Colonic mucosa (tissue), 4 donors: ENCODE measurements at regions of chr17 and their contacts with region 1.

Region 1: DNA sequence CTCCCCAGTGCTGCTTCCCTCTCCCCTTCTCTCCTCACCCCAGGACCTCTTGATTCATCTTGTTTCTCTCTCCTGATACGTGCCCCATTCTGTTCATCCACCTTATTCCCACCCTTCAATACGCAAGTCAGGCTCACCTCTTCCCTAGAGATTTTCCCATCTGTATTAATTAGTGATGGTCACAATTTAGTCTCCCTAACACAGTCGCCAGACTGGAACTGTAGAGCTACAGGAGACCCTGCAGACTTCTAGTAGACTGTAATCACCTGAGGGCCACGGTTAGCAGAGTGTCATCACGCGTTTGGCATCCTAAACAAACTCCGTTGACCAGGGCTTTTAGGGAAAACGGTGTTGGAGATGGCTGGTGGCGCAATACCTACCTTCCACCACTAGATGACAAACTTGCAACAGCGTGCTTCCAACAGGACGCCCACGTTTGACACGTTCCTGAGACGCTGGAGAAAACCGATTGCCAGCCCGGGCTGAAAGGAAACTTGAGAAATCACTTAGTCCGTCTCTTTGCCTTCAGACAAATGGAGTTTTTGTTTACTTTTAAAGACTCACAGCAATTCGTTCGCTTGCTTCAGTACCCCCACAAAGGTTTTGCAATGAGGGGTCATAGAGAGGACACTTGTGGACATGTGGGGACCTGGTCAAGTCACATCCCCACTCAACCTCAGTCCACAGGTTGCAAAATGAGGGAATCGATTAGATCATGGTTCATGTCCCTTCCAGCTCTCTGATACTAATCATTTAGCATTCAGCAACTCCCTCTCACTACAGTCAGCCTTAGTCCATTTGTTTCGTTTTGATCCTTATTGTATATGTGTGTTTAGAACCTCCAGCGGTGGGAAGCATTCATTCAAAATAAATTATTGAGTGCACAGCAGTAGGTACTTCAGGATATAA is 20.6 kb downstream of the MYL4 start:
- DNase-seq: peak; percentile 85
- H3K4me3 ChIP-seq: no peak overlapping the region
- H3K27ac ChIP-seq: peak overlapping the region; percentile 15
- H3K4me1 ChIP-seq: peaks cover 4% of the 10 kb centered on the region
- H3K27me3 ChIP-seq: no peaks in the 10 kb centered on the region
- CTCF ChIP-seq: peak; percentile 98

Region 2: DNA sequence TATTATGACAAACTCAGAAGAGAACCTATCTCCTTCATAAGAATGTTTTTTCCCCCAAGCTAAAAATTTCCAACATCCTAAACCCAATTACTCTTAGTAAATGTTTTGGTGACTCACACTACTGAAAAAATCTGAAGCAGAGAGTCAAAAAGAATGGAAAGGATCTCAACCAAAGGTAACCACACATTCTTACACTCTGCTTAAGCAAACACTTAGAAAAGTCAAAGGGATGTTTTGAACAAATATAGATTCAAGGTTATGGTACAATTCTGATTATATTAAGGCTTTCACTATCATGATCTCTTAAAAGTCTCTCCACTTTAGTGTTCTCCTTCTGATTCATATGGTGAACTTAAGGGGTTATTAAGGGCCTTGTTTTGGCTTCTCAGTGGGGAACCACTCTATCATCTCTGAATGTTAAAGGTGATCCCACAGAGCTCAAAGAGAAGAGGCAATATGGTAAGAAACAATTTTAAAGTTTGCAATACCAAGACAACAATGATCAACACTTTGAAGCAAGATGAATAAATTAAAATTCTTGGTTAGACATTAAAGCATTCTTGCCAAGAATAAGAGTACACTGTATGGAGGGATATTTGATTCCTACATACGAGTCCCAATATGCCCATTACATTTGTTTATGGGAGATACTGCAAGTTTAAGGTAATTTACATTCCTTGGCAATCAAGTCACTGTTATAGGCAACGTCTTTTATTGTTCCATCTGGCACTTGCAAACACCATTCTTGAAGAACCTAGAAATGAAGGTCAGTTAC is 109.9 kb before region 1 on chr17:
- intact Hi-C with region 1: no loop called
- DNase-seq: no peak
- H3K4me3 ChIP-seq: no peak overlapping the region
- H3K27ac ChIP-seq: no peak overlapping the region
- H3K4me1 ChIP-seq: no peaks in the 10 kb centered on the region
- H3K27me3 ChIP-seq: no peaks in the 10 kb centered on the region
- CTCF ChIP-seq: no peak

Region 3: DNA sequence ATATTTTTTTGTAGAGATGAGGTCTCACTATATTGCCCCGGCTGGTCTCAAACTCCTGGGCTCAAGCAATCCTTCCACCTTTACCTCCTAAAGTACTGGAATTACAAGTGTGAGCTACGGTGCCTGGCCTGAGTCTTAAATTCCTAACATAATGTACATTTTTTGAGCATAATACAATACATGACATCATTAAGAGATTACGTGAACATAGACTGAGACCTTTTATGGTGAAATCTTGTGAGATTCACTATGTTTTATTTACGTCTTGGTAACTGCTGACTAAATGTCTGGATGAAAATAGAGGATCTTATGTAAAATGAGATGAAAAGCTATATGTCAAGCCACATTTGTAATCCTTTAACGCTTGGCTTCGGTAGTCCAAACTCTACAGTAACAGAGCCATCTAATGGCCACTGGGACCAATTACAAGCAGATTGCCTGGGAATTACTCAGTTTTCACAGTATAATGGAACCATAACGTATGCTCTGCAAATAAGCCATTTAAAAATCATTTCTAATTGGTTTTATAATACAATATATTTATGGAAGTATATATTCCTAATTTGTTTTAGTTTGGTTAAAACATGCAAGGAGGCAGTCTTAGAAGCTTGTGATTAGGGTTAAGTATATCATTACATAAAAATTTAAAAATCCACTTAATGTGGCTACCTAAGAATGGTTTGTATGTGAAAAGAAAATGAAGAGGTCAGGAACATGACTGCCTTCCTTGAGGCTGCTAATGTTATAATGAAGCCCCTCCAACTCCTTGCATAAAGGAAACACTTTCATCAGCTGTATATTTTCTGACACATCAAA is 85.9 kb after region 1 on chr17:
- intact Hi-C with region 1: loop called (anchors 2 kb)
- DNase-seq: peak; percentile 61
- H3K4me3 ChIP-seq: no peak overlapping the region
- H3K27ac ChIP-seq: peak overlapping the region; percentile 56
- H3K4me1 ChIP-seq: no peaks in the 10 kb centered on the region
- H3K27me3 ChIP-seq: no peaks in the 10 kb centered on the region
- CTCF ChIP-seq: peak; percentile 70